Caco-2 (cell line): ENCODE measurements at regions of chr10 and their contacts with region 1.

Region 1: DNA sequence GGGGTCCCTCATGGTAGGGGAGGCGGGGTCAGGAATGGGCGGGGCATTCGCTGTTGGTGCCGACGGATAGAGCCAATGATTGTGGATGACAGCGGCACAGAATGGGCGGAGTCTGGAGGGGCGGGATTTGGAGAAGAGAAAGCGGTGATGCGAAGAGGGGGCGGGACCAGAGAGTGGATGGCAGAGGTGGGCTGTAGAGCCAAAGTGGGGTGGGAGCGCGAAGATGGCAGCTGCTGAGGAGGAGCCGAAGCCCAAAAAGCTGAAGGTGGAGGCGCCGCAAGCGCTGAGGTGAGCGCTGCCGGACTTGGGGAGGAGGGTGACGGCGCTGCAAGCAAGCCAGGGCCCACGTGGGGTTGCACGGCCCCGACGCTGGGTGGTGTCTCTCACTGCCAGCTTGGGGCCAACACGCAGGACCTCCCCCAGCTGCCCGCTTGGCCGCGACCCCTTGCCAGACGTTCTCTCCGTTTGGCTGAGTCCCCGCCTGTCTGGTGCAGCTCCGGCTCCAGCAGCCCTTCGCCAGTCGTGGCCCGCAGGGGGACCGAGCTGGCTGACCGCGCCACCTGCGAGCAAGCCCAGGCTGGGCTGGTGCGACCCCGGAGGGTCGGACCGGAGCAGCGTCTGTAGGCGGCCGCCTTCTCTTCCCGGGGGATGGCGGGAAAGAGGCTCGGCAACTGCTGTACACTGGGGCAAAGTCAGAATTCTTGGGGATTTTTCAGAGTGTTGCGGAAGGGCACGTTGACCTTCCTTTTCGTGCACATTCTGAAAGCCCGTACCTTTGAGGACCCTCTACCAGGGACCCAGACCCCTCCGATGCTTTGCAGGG is at the start of gene ADK:
- DNase-seq: peak; percentile 99
- H3K4me3 ChIP-seq: peak within 1 kb of the TSS; percentile 80
- H3K4me3 Mint-ChIP-seq: no peak within 1 kb of the TSS
- H3K27ac Mint-ChIP-seq: no peak within 1 kb of the TSS
- H3K4me1 ChIP-seq: peaks cover 14% of the 10 kb centered on the region
- H3K4me1 Mint-ChIP-seq: peaks cover 28% of the 10 kb centered on the region
- H3K27me3 ChIP-seq: no peaks in the 10 kb centered on the region
- H3K27me3 Mint-ChIP-seq: no peaks in the 10 kb centered on the region
- CTCF ChIP-seq: peak in 1 of 2 experiments; percentile 29
- total RNA-seq, gene ADK: 96.4 and 105 TPM in 2 replicates

Region 2: DNA sequence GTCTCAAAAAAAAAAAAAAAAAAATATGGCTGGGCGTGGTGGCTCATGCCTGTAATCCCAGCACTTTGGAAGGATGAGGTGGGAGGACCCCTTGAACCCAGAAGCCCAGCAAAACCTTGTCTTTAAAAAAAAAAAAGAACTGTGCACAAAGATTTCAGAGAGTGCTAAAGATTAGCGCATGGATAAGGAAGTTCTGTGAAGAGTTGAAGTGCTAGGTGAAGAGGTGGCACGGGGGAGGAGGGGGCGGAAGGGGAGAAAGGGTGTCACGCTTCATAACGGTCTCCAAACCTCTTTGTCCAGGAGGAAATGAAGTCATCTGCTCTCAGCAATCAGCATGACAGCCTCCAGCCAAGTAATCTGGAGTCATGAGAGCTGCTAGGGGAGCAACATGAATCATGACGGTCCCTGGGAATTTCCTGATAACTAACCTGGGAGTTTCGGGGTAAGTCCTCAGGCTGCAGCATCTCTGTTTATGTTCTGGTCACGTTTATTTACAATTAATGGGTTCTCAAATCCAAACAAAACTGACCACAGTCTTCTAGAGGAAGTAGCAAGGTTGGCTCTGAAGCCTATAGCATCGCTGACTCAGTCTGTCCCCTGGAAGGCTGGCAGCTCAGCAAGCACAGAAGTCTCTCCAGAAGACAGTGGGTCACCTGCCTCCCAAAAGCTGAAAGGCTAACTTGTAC is 242.3 kb before region 1 on chr10:
- CTCF ChIA-PET with region 1: no interaction called
- POLR2A ChIA-PET with region 1: no interaction called
- intact Hi-C with region 1: no loop called
- DNase-seq: no peak
- H3K4me3 ChIP-seq: no peak overlapping the region
- H3K4me3 Mint-ChIP-seq: no peak overlapping the region
- H3K27ac Mint-ChIP-seq: no peak overlapping the region
- H3K4me1 ChIP-seq: peaks cover 45% of the 10 kb centered on the region
- H3K4me1 Mint-ChIP-seq: peaks cover 26% of the 10 kb centered on the region
- H3K27me3 ChIP-seq: no peaks in the 10 kb centered on the region; the same call in 1 of the 2 replicates
- H3K27me3 Mint-ChIP-seq: no peaks in the 10 kb centered on the region
- CTCF ChIP-seq: no peak

Region 3: GRCh38 chr10:74165530-74165901 is 14.2 kb after region 1 on chr10:
- CTCF ChIA-PET with region 1: interaction called, 5 read pairs
- POLR2A ChIA-PET with region 1: interaction called, 5 read pairs
- intact Hi-C with region 1: loop called (anchors 1 kb)
- DNase-seq: no peak
- H3K4me3 ChIP-seq: no peak overlapping the region
- H3K4me3 Mint-ChIP-seq: peak overlapping the region; percentile 66
- H3K27ac Mint-ChIP-seq: peak overlapping the region; percentile 92
- H3K4me1 ChIP-seq: peaks cover 44% of the 10 kb centered on the region
- H3K4me1 Mint-ChIP-seq: peaks cover 19% of the 10 kb centered on the region
- H3K27me3 ChIP-seq: no peaks in the 10 kb centered on the region
- H3K27me3 Mint-ChIP-seq: no peaks in the 10 kb centered on the region
- CTCF ChIP-seq: no peak

Region 4: GRCh38 chr10:74189999-74190421 is 38.7 kb after region 1 on chr10:
- CTCF ChIA-PET with region 1: no interaction called
- POLR2A ChIA-PET with region 1: interaction called, 9 read pairs
- intact Hi-C with region 1: loop called (anchors 5 kb)
- DNase-seq: peak; percentile 55 to 64
- H3K4me3 ChIP-seq: no peak overlapping the region
- H3K4me3 Mint-ChIP-seq: peak overlapping the region; percentile 65
- H3K27ac Mint-ChIP-seq: peak overlapping the region; percentile 95
- H3K4me1 ChIP-seq: peaks cover 15% of the 10 kb centered on the region
- H3K4me1 Mint-ChIP-seq: peaks cover 43% of the 10 kb centered on the region
- H3K27me3 ChIP-seq: no peaks in the 10 kb centered on the region
- H3K27me3 Mint-ChIP-seq: no peaks in the 10 kb centered on the region
- CTCF ChIP-seq: no peak

Region 5: DNA sequence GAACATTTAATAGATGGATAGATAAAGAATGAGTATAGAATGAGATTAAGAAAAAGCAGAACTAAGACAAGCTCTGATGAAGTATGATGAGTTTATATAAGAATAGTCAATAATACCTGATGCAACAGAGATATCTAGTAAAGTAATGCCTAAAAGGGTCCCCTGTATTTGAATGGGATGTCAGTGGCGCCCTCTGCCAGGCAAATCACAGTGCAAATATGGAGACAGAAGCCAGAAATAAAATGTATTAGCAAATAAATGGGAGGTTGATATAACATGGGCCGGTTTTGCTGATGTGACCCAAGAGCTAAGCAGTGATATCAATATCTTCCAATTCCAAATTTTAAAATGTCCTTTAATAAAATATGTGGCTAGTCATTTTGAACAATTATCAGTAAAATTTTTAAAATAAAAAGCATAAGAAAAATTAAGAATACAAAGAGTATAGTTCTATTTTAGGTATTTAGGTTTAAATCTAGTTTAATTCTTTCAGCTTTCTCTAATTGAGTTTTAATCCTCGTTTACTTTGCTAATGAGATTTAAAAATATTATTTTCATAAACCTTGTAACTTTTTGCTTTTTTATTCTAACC is 62.4 kb after region 1 on chr10:
- CTCF ChIA-PET with region 1: no interaction called
- POLR2A ChIA-PET with region 1: no interaction called
- intact Hi-C with region 1: loop called (anchors 1 kb)
- DNase-seq: peak; percentile 45 to 60
- H3K4me3 ChIP-seq: no peak overlapping the region
- H3K4me3 Mint-ChIP-seq: no peak overlapping the region
- H3K27ac Mint-ChIP-seq: no peak overlapping the region
- H3K4me1 ChIP-seq: no peaks in the 10 kb centered on the region
- H3K4me1 Mint-ChIP-seq: no peaks in the 10 kb centered on the region
- H3K27me3 ChIP-seq: no peaks in the 10 kb centered on the region
- H3K27me3 Mint-ChIP-seq: no peaks in the 10 kb centered on the region
- CTCF ChIP-seq: peak in 1 of 2 experiments; percentile 70